ENCODE measurements at regions of chr2 and their contacts with region 1.

Region 1: GRCh38 chr2:151465771-151466170 is 56.1 kb downstream of the RIF1 start:
- DNase-seq: no peak
- H3K4me3 ChIP-seq: no peak overlapping the region
- H3K27ac ChIP-seq: no peak overlapping the region
- H3K4me1 ChIP-seq: no peaks in the 10 kb centered on the region
- CTCF ChIP-seq: no peak

Region 2: DNA sequence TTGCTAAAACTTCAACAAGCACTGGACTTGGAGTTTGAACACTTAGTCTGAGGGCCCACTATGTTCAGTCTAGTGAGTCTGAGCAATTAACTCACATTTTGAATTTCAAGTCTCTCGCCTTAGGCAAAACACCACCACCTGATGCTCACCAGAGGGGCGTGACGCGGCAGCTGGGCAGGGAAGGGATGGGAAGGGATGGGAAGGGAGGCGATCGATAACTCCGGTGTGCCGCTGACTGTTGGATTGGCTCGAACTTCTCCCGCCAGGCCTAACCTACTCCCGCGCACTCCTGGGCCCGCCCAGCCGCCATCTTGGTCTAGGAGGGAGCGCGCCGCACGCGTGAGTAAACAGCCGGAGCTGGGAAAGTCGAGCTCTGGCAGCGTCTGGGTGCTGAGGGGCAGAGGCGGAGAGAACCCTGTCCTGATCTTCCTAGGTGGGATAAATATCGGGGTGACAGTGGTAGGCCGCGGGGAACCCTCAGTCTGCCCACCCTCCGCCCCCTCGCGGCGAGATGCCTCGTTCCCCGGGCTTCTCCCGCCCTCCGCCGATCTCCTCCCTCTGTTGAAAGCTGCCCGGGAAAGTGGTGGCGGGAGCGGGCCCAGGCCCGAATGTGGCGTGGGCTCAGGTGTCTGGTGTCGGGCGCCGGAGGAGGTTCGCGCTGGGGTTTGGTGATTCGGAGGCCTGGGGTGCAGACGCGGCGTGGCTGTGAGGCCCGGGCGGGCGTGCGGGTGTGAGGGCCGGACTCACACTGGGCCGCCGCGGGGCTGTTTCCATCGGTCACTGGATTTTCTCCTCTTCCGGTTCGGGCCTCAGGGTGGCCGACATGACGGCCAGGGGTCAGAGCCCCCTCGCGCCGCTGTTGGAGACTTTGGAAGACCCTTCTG is 55.9 kb before region 1 on chr2 and contains the start of gene RIF1:
- CTCF ChIA-PET with region 1: no interaction called
- POLR2A ChIA-PET with region 1: no interaction called
- intact Hi-C with region 1: no loop called
- DNase-seq: peak; percentile 86
- H3K4me3 ChIP-seq: peak within 1 kb of the TSS; percentile 91
- H3K27ac ChIP-seq: peak within 1 kb of the TSS; percentile 72
- H3K4me1 ChIP-seq: peaks cover 14% of the 10 kb centered on the region
- CTCF ChIP-seq: peak; percentile 67
- total RNA-seq, gene RIF1: 45.3 and 52.4 TPM in 2 replicates

Region 3: GRCh38 chr2:151422917-151423439 is 42.8 kb before region 1 on chr2:
- CTCF ChIA-PET with region 1: no interaction called
- POLR2A ChIA-PET with region 1: no interaction called
- intact Hi-C with region 1: loop called (anchors 5 kb)
- DNase-seq: no peak
- H3K4me3 ChIP-seq: no peak overlapping the region
- H3K27ac ChIP-seq: no peak overlapping the region
- H3K4me1 ChIP-seq: no peaks in the 10 kb centered on the region
- CTCF ChIP-seq: no peak

Region 4: DNA sequence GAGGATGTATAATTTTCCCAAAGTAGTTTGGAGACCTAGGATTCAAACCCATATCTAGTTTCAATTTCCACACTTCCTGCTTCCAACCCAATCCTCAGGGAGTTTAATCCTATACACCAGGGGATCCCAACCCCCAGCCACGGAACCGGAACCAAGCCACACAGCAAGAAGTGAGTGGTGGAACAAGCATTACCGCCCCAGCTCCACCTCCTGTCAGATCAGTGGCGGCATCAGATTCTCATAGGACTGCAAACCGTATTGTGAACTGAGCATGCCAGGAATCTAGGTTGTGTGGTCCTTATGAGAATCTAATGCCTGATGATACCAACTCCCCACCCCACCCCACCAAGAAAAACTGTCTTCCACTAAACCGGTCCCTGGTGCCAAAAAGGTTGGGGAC is 1198.9 kb after region 1 on chr2:
- CTCF ChIA-PET with region 1: no interaction called
- POLR2A ChIA-PET with region 1: no interaction called
- intact Hi-C with region 1: loop called (anchors 10 kb)
- DNase-seq: no peak
- H3K4me3 ChIP-seq: no peak overlapping the region
- H3K27ac ChIP-seq: no peak overlapping the region
- H3K4me1 ChIP-seq: no peaks in the 10 kb centered on the region
- CTCF ChIP-seq: no peak

Measured in OCI-LY7 (cell line).